ENCODE measurements at regions of chr16 and their contacts with region 1.

Region 1: GRCh38 chr16:4624015-4624826 is at the start of gene MGRN1:
- DNase-seq: peak; percentile 93
- CTCF ChIP-seq: peak; percentile 93

Region 2: GRCh38 chr16:4288148-4288921 is 335.9 kb before region 1 on chr16:
- CTCF ChIA-PET with region 1: no interaction called
- POLR2A ChIA-PET with region 1: no interaction called
- DNase-seq: peak; percentile 94
- CTCF ChIP-seq: peak; percentile 99

Region 3: DNA sequence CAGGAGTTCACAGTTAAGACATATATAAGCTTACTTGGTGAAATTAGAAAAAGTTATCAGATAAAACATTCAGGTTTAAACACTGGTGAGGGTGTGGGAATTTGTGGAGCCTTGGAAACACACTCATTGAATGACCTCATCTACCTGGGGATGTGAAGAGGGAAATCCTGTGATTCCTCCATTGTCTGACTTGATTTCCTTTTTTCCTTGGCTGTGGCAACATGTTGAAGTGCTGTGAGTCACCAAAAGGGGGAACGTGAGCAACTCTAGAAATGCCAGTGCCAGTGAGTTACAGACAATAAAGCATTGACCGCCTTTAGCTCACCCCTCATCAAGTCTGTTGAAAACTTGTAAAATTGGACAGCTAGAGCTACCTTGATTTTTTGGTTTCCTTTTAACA is 146.3 kb before region 1 on chr16:
- CTCF ChIA-PET with region 1: no interaction called
- POLR2A ChIA-PET with region 1: no interaction called
- DNase-seq: no peak
- CTCF ChIP-seq: no peak

Region 4: DNA sequence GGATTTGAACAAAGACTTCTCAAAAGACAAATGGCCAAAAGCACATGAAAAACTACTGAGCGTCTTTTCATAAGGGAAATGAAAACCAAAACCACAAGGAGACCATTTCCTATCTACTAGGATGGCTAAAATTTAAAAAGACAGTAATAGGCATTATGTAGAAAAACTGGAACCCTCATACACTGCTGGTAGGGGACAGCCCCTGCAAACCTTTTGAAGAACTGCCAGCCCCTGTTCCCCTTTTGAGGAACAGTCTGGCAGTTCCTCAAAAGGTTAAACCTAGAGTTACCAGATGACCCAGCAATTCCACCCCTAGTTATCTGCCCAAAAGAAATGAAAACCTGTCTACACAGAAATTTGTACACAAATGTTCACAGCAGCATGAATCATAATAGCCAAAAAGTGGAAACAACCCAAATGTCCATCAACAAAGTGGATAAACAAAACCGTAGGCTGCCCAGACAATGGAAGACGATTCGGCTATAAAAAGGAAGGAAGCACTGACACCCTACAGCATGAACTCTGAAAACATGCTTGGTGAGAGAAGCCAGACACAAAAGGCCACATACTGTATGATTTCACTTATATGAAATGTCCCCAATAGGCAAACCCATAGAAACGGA is 108.5 kb before region 1 on chr16:
- CTCF ChIA-PET with region 1: no interaction called
- POLR2A ChIA-PET with region 1: no interaction called
- DNase-seq: peak; percentile 43
- CTCF ChIP-seq: no peak

Region 5: GRCh38 chr16:4639899-4640509 is 15.8 kb after region 1 on chr16:
- CTCF ChIA-PET with region 1: interaction called, 60 read pairs
- POLR2A ChIA-PET with region 1: interaction called, 3 read pairs
- DNase-seq: no peak
- CTCF ChIP-seq: no peak